Psoas muscle (tissue), 8 donors: ENCODE measurements at regions of chr17 and their contacts with region 1.

Region 1: GRCh38 chr17:18033442-18034099 is 5.4 kb downstream of the ATPAF2 start:
- DNase-seq: no peak
- ATAC-seq: peak; percentile 85 to 89 (median 88)
- H3K4me3 ChIP-seq: no peak overlapping the region
- H3K27ac ChIP-seq: peak overlapping the region; percentile 43
- H3K4me1 ChIP-seq: peaks cover 30% of the 10 kb centered on the region
- H3K27me3 ChIP-seq: no peaks in the 10 kb centered on the region
- CTCF ChIP-seq: peak; percentile 66

Region 2: DNA sequence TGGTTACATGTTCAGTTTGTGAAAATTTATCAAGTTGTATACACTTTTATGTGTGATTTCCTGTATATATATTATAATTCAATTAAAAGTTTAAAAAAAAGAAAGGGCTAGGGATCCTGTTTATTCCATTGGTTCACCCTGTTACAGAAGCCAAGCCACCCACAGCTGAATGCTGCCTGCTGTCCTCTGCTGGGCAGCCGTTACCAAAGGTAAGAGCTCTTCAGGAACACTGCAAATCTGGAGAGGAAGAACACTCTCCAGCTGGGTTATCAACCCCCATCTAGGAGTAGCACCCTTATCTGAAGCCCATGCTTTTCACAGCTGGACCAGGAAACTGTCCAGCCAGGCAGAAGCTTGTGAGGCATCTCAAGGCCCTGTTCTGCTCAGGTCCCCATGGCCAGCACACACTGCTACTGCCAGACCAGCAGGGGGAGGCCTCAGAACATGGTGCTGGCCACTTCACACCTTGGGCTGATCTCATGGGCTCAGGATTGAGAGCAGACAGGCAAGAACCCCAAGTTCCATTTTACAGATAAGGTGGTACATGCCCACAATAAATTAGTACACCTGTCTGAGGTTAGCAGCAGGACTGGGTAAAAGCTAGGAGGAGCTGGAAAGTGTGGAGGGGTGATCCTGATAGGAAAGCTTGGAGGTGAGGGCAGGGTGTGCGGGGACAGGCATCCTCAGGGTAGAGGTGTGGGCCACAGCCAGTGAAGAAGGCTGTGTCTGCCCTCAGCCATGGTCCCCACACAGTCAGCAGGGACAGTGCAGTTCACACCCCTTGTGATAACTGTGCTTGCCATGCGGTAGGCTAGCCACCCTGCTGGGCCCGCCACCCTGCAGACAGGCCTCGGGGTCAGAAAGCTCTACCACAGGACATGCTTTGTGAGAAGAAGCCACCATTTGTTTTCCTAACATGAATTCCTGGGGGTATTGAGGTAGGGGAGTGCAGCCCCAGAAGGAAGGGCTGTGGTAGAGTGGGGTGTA is 142.5 kb before region 1 on chr17:
- intact Hi-C with region 1: loop called (anchors 5 to 10 kb)
- DNase-seq: peak; percentile 34 to 59
- ATAC-seq: peak; percentile 50 to 85 (median 76)
- H3K4me3 ChIP-seq: no peak overlapping the region
- H3K27ac ChIP-seq: no peak overlapping the region
- H3K4me1 ChIP-seq: peaks cover 9% of the 10 kb centered on the region
- H3K27me3 ChIP-seq: no peaks in the 10 kb centered on the region
- CTCF ChIP-seq: peak; percentile 69

Region 3: GRCh38 chr17:17972126-17972951 is 61.2 kb before region 1 on chr17 and contains the starts of genes DRC3 and TOM1L2:
- intact Hi-C with region 1: loop called (anchors 2 to 5 kb)
- DNase-seq: peak; percentile 100
- ATAC-seq: peak; percentile 96 to 98 (median 96)
- H3K4me3 ChIP-seq: peak within 1 kb of the TSS; percentile 94
- H3K27ac ChIP-seq: peak within 1 kb of the TSS; percentile 96
- H3K4me1 ChIP-seq: peaks cover 26% of the 10 kb centered on the region
- H3K27me3 ChIP-seq: no peaks in the 10 kb centered on the region
- CTCF ChIP-seq: no peak
- total RNA-seq, gene DRC3: 0.39 to 1.8 (median 0.73) TPM
- total RNA-seq, gene TOM1L2: 72.0 to 89.8 (median 87.2) TPM

Region 4: GRCh38 chr17:17985555-17985954 is 48.0 kb before region 1 on chr17:
- intact Hi-C with region 1: loop called (anchors 5 kb)
- DNase-seq: no peak
- ATAC-seq: no peak
- H3K4me3 ChIP-seq: no peak overlapping the region
- H3K27ac ChIP-seq: no peak overlapping the region
- H3K4me1 ChIP-seq: peaks cover 5% of the 10 kb centered on the region
- H3K27me3 ChIP-seq: no peaks in the 10 kb centered on the region
- CTCF ChIP-seq: no peak

Region 5: DNA sequence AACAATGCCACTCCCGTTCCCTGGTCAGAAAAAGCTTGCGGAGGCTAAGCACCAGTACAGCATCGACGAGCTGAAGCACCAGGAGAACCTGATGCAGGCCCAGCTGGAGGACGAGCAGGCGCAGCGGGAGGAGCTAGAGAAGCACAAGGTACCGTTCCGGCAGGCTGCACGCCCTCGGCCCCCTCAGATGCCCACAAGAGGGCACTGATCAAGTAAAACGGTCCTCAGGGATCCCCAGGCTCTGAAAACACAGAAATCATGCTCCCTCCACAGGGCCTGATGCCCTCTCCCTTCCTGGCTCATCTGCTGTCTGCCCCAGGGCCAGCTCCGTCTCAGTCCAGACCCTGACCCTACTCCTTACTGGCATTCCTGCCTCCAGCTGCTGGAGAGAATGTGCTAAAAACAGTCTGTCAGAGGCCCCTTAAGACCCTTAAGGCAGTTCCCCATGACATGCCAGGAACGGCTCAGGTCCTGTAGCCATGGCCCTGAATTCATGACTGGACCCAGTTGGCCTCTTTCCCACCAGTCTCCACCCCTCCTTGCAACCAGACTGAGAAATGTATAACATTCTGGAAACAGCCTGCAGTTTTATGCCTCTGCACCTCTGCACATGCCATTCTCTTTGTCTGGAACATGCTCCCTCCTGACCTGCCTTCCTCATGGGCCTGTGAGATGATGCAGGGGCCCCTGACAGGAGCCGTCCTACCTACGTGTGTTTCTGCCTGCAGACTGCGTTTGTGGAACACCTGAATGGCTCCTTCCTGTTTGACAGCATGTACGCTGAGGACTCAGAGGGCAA is 39.1 kb before region 1 on chr17:
- intact Hi-C with region 1: loop called (anchors 5 kb)
- DNase-seq: peak in 1 of 2 donors; percentile 29
- ATAC-seq: peak in 3 of 4 donors; percentile 29 to 49 (median 47)
- H3K4me3 ChIP-seq: no peak overlapping the region
- H3K27ac ChIP-seq: no peak overlapping the region
- H3K4me1 ChIP-seq: peaks cover 21% of the 10 kb centered on the region
- H3K27me3 ChIP-seq: no peaks in the 10 kb centered on the region
- CTCF ChIP-seq: peak; percentile 16

Region 6: DNA sequence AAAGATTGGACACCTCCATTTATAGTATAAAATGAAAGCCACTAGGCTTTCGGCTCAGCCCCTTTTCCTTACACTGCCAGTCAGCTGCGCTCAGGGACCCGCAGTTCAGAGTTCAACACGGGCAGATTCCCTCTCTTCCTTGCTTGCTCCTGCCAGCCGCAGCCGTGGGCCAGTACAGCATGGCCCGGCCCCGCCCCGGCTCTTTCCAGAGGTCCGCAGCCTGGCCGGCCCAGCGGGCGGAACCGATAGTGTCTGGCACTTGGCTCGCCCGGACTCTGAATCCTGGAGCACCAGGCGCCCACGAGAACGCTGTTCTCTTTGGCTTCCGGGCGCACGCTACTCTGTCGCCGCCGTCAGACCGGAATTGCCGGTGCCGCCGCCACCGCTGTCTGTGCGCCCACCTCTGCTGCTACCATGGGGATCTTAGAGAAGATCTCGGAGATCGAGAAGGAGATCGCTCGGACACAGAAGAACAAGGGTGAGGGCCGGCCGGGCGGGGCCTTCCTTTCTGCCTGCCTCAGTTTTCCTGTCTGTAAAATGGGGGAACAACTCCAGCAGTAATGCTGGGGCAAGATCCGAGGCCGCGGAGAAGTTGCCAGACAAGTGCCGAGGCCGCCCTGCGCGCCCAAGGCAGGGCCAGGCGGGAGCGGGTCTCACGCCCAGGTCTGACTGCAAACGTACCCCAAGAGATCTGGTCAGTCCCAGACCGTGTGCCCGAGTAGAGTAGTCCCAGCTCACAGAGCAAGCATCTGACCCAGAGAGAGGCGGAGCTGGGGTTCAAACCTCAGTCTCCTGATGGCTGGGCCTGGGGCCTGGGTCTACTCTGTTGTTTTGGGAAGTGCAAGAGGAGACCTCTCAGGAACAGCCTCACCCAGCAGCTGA is 54.3 kb after region 1 on chr17 and contains the start of gene DRG2:
- intact Hi-C with region 1: no loop called
- DNase-seq: peak; percentile 94 to 96
- ATAC-seq: peak; percentile 96 to 99 (median 96)
- H3K4me3 ChIP-seq: peak within 1 kb of the TSS; percentile 82
- H3K27ac ChIP-seq: peak within 1 kb of the TSS; percentile 84
- H3K4me1 ChIP-seq: peaks cover 8% of the 10 kb centered on the region
- H3K27me3 ChIP-seq: no peaks in the 10 kb centered on the region
- CTCF ChIP-seq: no peak
- total RNA-seq, gene DRG2: 23.7 to 33.5 (median 27.9) TPM